ENCODE measurements at regions of chr6 and their contacts with region 1.

Region 1: GRCh38 chr6:90383196-90383822 is 86.7 kb upstream of the BACH2 start:
- DNase-seq: no peak
- H3K4me3 Mint-ChIP-seq: no peak overlapping the region
- H3K27ac Mint-ChIP-seq: peak overlapping the region; percentile 78
- H3K4me1 Mint-ChIP-seq: peaks cover 53% of the 10 kb centered on the region
- H3K27me3 Mint-ChIP-seq: peaks cover 2% of the 10 kb centered on the region

Region 2: DNA sequence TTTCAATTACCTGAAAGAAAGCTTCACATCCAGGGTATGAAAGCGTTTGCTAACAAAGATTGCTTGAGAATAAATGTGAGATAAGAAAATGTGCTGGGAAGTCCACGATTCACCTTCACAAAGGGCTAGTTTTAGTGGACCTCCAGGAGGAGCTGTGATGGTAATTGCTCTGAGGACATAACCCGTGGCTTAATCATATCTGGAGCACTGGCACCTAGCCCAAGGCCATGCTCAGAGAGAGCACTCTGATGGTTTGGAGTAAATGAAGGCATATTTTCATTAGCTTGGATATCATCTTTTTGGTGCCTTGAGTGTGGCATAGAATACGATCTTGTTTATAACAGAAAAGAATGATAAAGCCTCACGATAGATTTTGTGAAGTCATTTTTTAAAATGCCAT is 39.7 kb before region 1 on chr6:
- intact Hi-C with region 1: no loop called
- DNase-seq: no peak
- H3K4me3 Mint-ChIP-seq: no peak overlapping the region
- H3K27ac Mint-ChIP-seq: no peak overlapping the region
- H3K4me1 Mint-ChIP-seq: peaks cover 16% of the 10 kb centered on the region
- H3K27me3 Mint-ChIP-seq: peaks cover 5% of the 10 kb centered on the region

Region 3: DNA sequence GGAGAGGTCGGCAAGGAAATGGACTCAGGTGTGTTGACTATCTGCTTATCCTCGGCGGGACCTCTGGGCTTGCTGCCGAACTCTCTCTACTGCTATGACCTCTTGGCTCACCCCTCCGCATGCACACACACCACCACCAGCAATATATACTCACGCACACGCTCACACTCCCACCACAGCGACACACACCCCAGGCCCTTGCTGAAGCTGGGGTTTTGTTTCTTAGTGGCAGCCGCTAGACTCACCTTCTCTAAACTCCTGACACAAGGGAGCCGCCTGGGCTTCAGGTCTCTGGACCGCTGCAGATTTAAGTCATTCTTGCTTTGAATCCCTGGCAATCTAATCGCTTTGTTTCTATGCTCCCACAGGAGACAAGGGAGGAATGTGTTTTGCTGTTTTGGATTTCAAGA is 27.3 kb before region 1 on chr6:
- intact Hi-C with region 1: no loop called
- DNase-seq: no peak
- H3K4me3 Mint-ChIP-seq: no peak overlapping the region
- H3K27ac Mint-ChIP-seq: no peak overlapping the region
- H3K4me1 Mint-ChIP-seq: peaks cover 25% of the 10 kb centered on the region
- H3K27me3 Mint-ChIP-seq: no peaks in the 10 kb centered on the region

Region 4: GRCh38 chr6:90369024-90369519 is 14.2 kb before region 1 on chr6:
- intact Hi-C with region 1: loop called (anchors 1 kb)
- DNase-seq: peak; percentile 29
- H3K4me3 Mint-ChIP-seq: no peak overlapping the region
- H3K27ac Mint-ChIP-seq: peak overlapping the region; percentile 62
- H3K4me1 Mint-ChIP-seq: peaks cover 30% of the 10 kb centered on the region
- H3K27me3 Mint-ChIP-seq: peaks cover 7% of the 10 kb centered on the region

Measured in activated T-helper 2 cell treated with anti-CD3 and anti-CD28 coated beads, Interferon-gamma antibody, Interleukin-2, Interleukin-4, amounts not matched to agents 10 μg/mL and 5 μg/mL and 100 μg/mL, durations not matched to agents 14 hours and 24 hours and 36 hours (primary cell).